Psoas muscle (tissue), 8 donors: ENCODE measurements at regions of chr18 and their contacts with region 1.

Region 1: DNA sequence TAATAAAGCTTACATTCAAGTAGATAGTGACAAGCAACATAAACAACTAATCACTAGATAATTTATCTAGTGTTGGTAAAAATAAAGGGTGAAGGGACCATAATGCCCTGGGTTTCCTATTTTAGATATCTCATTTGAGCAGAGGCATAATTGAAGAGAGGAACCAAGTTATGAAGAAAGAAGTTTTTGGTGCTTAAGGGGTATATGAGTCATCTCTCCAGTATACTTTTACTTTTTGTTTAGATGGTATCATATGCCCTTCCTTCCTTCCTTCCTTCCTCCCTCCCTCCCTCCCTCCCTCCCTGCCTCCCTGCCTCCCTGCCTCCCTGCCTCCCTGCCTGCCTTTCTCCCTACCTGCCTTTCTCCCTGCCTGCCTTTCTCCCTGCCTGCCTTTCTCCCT is 1053.5 kb upstream of the CELF4 start:
- DNase-seq: no peak
- ATAC-seq: no peak
- H3K4me3 ChIP-seq: no peak overlapping the region
- H3K27ac ChIP-seq: no peak overlapping the region
- H3K4me1 ChIP-seq: no peaks in the 10 kb centered on the region
- H3K27me3 ChIP-seq: no peaks in the 10 kb centered on the region
- CTCF ChIP-seq: no peak

Region 2: DNA sequence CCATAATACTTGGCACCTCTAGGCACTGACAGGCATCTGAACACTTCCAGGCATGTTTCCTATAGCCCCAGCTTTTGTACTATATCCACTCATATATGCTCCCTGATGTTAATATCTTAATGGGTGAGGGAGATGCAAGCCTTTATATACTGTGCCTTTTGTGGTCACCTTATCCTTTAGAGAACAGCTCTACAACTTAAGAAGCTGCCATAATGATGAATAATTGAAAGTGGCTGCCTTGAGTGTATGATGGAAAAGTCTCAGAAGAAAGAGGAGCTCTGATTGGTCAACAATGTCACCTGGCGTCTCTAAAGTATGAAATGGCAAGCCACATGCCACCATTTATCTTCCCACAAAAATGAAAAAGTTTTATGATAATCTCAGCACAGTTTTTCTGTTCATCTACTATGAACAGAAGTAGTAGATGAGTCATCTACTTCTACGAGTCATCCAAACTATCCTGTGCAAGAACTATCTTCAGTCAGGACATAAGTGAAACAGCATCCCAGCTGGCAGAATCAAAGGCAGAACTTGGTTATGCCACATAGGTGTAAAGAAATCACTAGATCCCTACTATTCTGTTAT is 55.6 kb before region 1 on chr18:
- intact Hi-C with region 1: no loop called
- DNase-seq: no peak
- ATAC-seq: no peak
- H3K4me3 ChIP-seq: no peak overlapping the region
- H3K27ac ChIP-seq: no peak overlapping the region
- H3K4me1 ChIP-seq: no peaks in the 10 kb centered on the region
- H3K27me3 ChIP-seq: no peaks in the 10 kb centered on the region
- CTCF ChIP-seq: no peak

Region 3: DNA sequence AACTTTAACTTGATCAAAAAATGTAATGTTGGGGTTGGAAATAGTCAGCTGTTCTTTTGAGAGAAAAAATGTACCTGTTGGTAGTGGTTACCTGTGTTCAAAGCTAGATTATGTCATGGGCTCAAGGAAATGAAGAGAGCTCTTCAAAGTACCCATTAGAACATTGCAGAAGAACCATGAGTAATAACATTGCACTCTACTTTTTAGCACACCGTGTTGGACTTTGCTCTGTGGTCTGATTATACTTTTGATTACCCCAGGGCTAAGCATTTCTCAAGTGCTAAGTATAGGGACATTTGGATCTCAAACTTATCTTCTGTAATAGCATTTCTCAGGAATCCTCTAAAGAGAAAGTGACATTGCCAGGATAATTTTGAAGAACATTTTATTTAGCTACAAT is 69.3 kb after region 1 on chr18:
- intact Hi-C with region 1: loop called in 1 of 2 experiments (anchors 10 kb)
- DNase-seq: no peak
- ATAC-seq: no peak
- H3K4me3 ChIP-seq: no peak overlapping the region
- H3K27ac ChIP-seq: no peak overlapping the region
- H3K4me1 ChIP-seq: no peaks in the 10 kb centered on the region
- H3K27me3 ChIP-seq: no peaks in the 10 kb centered on the region
- CTCF ChIP-seq: no peak